Left colon (tissue), 2 donors: ENCODE measurements at regions of chr3 and their contacts with region 1.

Region 1: DNA sequence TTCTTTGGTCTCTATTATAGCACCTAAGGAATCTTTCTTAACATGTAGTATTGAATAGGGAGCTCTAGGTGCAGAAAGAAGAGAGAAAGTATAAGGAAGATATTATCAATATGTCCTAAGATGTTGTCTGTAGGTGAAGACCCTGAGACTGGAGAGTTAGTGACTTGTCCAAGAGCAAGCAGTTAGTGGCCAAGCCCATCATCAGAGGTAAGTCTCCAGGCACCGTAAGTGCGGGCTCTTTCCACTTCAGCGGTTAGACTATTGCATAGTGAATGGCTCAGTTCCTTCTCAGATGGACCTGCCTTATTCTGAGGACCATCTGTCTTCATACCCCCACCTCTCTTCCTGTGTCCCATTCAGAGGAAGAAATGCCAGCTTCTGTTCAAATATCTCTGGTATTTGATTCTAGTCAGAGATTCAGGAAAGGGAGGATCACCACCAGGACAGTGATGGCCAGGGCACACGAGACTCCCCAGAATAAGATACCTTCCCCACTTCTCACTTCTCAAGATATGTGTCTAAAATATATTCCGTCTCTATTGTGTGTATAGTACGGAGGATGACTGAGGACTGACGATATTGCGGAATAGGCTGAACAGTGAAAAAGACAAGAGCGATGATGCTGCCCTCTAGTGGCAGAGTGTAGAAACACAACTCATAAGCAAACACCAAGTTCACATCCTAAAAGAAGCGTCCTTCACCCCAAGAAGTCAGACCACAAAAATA is 19.1 kb upstream of the ADGRG7 start:
- DNase-seq: peak; percentile 37 to 50
- ATAC-seq: peak; percentile 79

Region 2: DNA sequence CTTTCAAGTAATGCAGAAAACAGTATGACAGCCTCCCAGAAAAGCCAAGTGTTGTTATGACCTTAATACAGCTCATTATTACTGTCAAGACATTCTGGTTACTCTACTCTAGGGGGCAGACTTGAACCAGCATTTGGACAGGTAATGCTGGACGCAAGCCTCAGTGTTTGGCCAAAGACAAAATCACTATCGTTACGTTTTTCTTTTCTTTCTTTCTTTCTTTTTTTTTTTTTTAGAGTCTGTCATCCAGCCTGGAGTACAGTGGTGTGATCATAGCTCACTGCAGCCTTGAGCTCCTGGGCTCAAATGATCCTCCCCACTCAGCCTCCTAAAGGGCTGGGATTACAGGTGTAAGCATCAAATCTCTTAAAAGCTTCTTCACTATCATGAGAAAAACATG is 127.3 kb before region 1 on chr3:
- intact Hi-C with region 1: loop called in 1 of 2 experiments (anchors 2 kb)
- DNase-seq: peak in 1 of 2 donors; percentile 7
- ATAC-seq: peak; percentile 89

Region 3: GRCh38 chr3:100492059-100493006 is 97.9 kb before region 1 on chr3 and contains the start of gene TMEM45A:
- intact Hi-C with region 1: no loop called
- DNase-seq: peak; percentile 91 to 94
- ATAC-seq: peak; percentile 100
- total RNA-seq, gene TMEM45A: 1.9 to 4.6 TPM

Region 4: GRCh38 chr3:100697172-100697571 is 106.9 kb after region 1 on chr3:
- intact Hi-C with region 1: no loop called
- DNase-seq: peak in 1 of 2 donors; percentile 59
- ATAC-seq: peak; percentile 77